K562 (cell line): ENCODE measurements at regions of chr7 and their contacts with region 1.

Region 1: DNA sequence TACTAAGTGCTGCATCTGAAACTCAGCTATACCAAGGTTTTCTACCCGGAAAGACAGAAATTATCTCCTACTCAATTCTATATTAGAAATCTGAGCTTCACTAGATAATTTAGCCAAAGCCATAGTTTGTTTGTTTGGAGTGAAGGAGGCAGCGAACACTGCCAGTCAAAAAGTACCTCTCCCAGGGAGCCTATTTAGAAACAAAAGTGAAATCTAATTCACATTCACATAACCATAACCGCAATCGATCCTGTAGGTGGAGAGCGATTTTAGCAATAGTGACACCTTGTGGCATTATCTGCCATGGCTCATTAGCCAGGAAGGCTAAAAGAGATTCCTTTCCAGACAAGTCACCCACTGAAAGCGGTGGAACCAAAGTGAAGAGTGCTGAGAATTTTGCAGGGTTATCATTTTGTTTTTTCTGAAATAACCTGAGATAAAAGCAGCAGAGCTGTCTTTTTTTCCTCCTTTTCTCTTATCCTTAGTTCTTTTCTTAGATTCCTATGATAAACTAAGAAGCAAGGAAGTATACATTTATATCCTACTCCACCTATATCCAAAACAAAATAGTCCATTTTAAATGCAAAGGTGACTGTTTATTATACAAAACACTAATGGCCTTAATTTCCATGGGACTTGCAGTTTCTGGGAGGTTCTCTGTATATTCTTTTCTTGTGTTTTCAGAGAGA is 83.7 kb upstream of the BET1 start:
- DNase-seq: peak; percentile 51 to 57 (median 55)
- ATAC-seq: peak; percentile 88
- H3K4me3 ChIP-seq: no peak overlapping the region
- H3K27ac ChIP-seq: no peak overlapping the region
- H3K4me1 ChIP-seq: no peaks in the 10 kb centered on the region
- H3K27me3 ChIP-seq: peaks cover 3 to 17% of the 10 kb centered on the region in 2 experiments
- CTCF ChIP-seq: peak; percentile 74 to 79 (median 77)
- EP300 ChIP-seq: no peak
- POLR2A ChIP-seq: no peak
- RAD21 ChIP-seq: peak; percentile 82 to 87

Region 2: GRCh38 chr7:93245525-93246432 is 842.0 kb before region 1 on chr7:
- CTCF ChIA-PET with region 1: no interaction called
- POLR2A ChIA-PET with region 1: no interaction called
- in situ Hi-C with region 1: no loop called
- intact Hi-C with region 1: loop called (anchors 10 kb)
- DNase-seq: peak in 3 of 4 experiments; percentile 17 to 38 (median 22)
- ATAC-seq: no peak
- H3K4me3 ChIP-seq: no peak overlapping the region
- H3K27ac ChIP-seq: no peak overlapping the region
- H3K4me1 ChIP-seq: no peaks in the 10 kb centered on the region; a peak in 1 of 5 replicates
- H3K27me3 ChIP-seq: no peaks in the 10 kb centered on the region
- CTCF ChIP-seq: peak in 2 of 3 experiments; percentile 43 to 81; a peak in 4 of 6 replicates
- EP300 ChIP-seq: no peak
- POLR2A ChIP-seq: no peak
- RAD21 ChIP-seq: peak; percentile 77 to 89

Region 3: GRCh38 chr7:93442478-93443224 is 645.2 kb before region 1 on chr7:
- CTCF ChIA-PET with region 1: interaction called, 5 read pairs
- POLR2A ChIA-PET with region 1: no interaction called
- in situ Hi-C with region 1: no loop called
- intact Hi-C with region 1: loop called (anchors 10 kb)
- DNase-seq: peak; percentile 57 to 69 (median 65)
- ATAC-seq: peak; percentile 94
- H3K4me3 ChIP-seq: no peak overlapping the region
- H3K27ac ChIP-seq: no peak overlapping the region
- H3K4me1 ChIP-seq: no peaks in the 10 kb centered on the region
- H3K27me3 ChIP-seq: no peaks in the 10 kb centered on the region
- CTCF ChIP-seq: peak; percentile 71 to 88 (median 77)
- EP300 ChIP-seq: no peak
- POLR2A ChIP-seq: no peak
- RAD21 ChIP-seq: peak; percentile 60 to 65

Region 4: DNA sequence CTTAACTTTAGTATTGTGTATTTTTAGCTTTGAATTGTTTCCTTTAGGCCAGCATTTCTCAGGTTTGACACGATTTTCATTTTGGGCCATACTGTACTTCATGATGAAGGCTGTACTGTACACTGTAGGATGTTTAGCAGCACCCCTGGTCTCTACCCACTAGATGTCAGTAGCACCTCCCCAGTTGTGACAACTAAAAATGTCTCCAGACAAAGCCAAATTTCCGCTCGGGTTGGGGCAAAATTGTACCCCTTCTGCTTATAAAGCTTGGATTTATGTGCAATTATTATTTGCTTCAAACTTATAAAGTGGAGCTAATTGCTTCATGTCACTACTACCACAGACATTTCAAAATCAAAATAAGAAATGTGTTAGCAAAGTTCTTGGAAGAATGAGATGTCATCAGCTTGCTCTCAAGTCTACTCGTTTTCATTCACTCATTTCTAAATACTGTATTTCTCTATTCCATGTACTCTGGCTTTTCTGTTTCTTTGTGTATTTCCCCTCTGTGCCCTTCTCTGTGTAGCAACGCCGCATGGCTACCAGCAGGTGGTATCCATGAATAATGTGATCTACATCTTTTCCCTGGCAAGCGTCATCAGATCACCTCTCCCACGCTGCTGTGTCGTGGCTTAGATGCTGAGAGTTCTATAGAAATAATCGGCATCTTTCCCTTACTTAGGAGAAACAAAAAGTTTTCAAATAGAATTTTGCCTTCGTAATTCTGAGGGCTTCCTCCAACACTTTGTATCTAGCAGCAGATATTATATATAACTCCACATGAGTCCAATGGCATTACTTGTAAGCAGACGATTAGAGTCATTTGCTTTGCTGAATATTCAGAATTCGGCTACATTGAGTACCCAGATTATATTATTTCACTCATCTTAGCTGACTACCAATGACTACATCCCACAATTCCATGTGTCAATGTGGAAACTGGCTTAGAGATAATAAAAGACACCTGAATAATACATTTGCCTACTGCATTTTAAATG is 465.5 kb before region 1 on chr7:
- CTCF ChIA-PET with region 1: no interaction called
- POLR2A ChIA-PET with region 1: no interaction called
- in situ Hi-C with region 1: no loop called
- intact Hi-C with region 1: loop called (anchors 1 kb)
- DNase-seq: peak; percentile 35 to 59 (median 52)
- ATAC-seq: peak; percentile 98
- H3K4me3 ChIP-seq: no peak overlapping the region
- H3K27ac ChIP-seq: no peak overlapping the region
- H3K4me1 ChIP-seq: 0 out of 5 replicates have a peak, but pooled peaks cover 0 to 3% of the 10 kb centered on the region in 2 experiments
- H3K27me3 ChIP-seq: no peaks in the 10 kb centered on the region
- CTCF ChIP-seq: peak; percentile 60 to 63 (median 61)
- EP300 ChIP-seq: no peak
- POLR2A ChIP-seq: no peak
- RAD21 ChIP-seq: peak; percentile 44 to 53

Region 5: DNA sequence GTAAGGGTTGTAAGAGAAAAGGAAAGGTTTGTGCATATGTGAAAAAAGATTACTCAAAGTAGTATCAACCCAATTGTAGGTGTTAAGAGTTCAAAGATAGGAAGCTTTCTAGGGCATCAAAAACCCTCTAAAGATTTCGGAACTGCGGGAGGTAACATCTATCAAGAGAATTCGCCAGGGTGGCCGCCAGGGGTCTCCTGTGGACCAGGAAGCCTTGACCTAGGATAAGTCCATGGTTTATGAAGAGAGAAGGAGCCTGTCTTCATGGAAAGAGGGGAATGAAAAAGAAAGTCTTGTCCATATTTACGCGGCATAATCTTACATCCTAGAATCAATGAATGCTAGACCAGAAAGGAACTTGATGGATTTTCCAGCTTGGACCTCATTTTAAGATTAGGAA is 372.6 kb before region 1 on chr7:
- CTCF ChIA-PET with region 1: interaction called, 6 read pairs
- POLR2A ChIA-PET with region 1: no interaction called
- in situ Hi-C with region 1: no loop called
- intact Hi-C with region 1: loop called (anchors 2 kb)
- DNase-seq: peak; percentile 32 to 73 (median 51)
- ATAC-seq: peak; percentile 95
- H3K4me3 ChIP-seq: no peak overlapping the region
- H3K27ac ChIP-seq: no peak overlapping the region
- H3K4me1 ChIP-seq: peaks cover 0 to 6% of the 10 kb centered on the region in 2 experiments; a peak in 2 of 5 replicates
- H3K27me3 ChIP-seq: no peaks in the 10 kb centered on the region
- CTCF ChIP-seq: peak; percentile 69 to 84 (median 75)
- EP300 ChIP-seq: no peak
- POLR2A ChIP-seq: no peak
- RAD21 ChIP-seq: peak; percentile 81 to 85

Region 6: DNA sequence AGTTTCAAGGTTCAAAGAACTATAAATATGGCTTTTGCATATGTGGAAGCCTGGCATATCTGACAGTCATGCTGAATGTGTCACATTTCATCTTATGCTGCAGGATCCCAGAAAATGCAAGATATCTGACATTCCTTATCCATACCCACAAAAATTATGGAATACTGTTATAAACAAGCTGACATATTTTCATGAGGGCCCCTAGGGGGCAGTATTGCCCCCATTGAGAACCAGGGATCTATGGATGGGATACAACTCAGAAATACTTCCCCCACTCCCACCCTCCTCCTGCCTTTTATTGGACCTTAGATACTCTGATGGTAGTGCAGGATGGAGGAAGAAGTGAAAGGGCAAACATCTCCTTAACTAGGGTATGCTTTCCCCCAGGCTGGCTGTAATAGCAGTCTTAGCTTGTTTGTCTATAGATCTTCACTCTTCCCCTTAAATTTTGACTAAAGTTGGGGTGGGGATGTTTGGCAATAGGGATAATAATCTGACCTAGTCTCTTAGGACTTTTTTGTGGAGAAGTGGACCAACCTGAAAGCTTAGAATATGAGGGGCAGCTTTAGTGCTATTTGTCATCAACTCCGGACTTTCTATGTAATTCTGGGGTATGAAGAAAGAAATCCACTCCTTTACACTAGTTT is 184.9 kb before region 1 on chr7:
- CTCF ChIA-PET with region 1: interaction called, 6 read pairs
- POLR2A ChIA-PET with region 1: no interaction called
- in situ Hi-C with region 1: no loop called
- intact Hi-C with region 1: loop called (anchors 1 kb)
- DNase-seq: peak; percentile 51 to 60 (median 56)
- ATAC-seq: peak; percentile 83
- H3K4me3 ChIP-seq: no peak overlapping the region
- H3K27ac ChIP-seq: no peak overlapping the region
- H3K4me1 ChIP-seq: no peaks in the 10 kb centered on the region
- H3K27me3 ChIP-seq: no peaks in the 10 kb centered on the region
- CTCF ChIP-seq: peak; percentile 65 to 87 (median 79)
- EP300 ChIP-seq: no peak
- POLR2A ChIP-seq: no peak
- RAD21 ChIP-seq: peak; percentile 64 to 80